ENCODE measurements at regions of chr6 and their contacts with region 1.

Region 1: DNA sequence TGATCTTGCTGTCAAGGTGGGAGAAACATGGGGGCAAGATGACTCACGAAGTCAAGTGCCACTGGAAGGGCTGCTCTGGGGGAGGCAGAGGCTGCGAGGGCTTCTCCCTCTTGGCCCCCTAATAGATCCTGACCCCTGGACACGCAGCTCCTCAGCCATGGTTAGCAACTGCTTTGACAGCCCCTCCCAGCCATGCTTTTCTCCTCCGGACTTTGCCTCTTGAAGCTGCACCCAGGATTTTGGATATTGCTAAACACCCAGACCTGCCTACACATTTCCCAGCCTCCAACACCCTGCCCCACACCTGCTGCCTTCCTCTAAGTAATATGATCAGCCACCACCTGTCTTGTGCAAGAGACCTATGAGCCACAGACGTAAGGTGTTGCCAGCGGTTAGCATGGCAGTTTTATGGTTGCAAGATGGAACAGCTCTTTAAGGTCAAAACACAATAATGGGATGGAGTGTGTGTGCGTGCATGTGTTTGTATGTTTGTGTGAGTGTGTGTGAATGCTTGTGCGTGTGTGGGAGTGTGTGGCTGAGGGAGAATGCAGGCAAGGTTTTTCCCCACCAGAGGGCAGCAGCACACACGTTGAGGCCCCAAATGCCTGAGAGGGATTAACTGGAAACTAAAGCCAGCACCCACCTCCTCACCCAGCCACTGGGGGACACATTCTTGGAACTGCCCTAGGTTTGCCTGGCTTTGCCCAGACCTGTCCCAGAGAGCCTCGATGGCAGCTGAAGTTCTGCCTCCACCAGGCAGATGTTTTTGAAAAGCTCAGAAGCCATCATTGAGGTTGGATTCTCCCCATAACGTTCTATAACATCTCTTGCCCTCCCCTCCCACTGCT is 2.5 kb downstream of the IP6K3 start:
- DNase-seq: peak; percentile 90
- H3K4me3 ChIP-seq: no peak overlapping the region; a peak in 1 of 4 replicates
- H3K27ac ChIP-seq: no peak overlapping the region
- H3K4me1 ChIP-seq: peaks cover 15 to 37% of the 10 kb centered on the region in 2 experiments; a peak in 3 of 4 replicates
- H3K27me3 ChIP-seq: no peaks in the 10 kb centered on the region
- CTCF ChIP-seq: peak; percentile 93
- EP300 ChIP-seq: no peak
- RAD21 ChIP-seq: peak; percentile 83

Region 2: DNA sequence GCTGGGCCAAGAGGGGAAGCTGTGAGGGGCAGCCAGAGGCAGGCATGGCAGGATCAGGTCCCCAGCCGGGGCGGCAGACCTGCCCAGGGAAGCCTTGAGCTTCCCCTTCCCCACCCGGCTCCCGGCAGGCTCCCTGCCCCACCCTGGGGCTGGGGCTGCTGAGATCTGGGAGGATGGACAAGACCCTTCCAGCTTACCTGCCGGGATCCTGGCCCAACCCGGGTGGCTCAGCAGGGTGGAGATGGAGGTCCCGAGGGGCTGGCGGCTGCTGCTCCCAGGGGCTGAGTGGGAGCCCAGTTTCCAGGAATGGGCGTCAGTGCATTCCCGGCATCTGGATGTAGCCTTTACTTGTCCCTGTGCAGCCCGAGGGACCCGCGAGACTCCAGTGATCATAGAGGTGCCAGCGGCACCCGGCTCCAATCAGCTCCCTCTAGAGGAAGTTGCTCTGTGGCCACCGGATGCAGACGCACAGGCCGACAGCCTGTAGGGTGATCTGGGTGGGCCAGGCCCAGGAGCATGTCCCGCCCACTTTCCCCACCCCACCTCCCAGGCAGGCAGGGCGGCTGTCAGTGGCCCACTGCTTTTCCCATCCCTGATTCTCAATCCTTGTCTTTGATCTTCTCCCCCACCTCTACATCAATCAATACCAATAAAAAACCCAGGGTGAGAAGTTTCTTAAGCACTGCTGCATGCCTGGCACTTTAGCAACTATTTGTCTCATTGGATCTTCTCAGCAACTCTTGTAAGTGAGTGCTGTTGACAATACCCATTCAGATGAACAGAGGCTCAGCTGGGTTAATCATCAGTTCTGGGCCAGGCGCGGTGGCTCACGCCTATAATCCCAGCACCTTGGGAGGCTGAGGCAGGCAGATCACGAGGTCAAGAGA is 164.2 kb before region 1 on chr6 and contains the start of gene BAK1:
- CTCF ChIA-PET with region 1: interaction called, 11 read pairs
- POLR2A ChIA-PET with region 1: no interaction called
- DNase-seq: peak; percentile 97
- H3K4me3 ChIP-seq: peak within 1 kb of the TSS; percentile 81 to 93
- H3K27ac ChIP-seq: peak within 1 kb of the TSS; percentile 56 to 64; a peak in 3 of 4 replicates
- H3K4me1 ChIP-seq: peaks cover 0 to 11% of the 10 kb centered on the region in 2 experiments; a peak in 1 of 4 replicates
- H3K27me3 ChIP-seq: no peaks in the 10 kb centered on the region
- CTCF ChIP-seq: peak; percentile 52
- EP300 ChIP-seq: no peak
- RAD21 ChIP-seq: peak; percentile 36; the same call in 1 of the 2 replicates
- polyA plus RNA-seq, gene BAK1: 15.4 and 21.2 TPM in 2 replicates

Region 3: GRCh38 chr6:33719326-33719987 is 24.8 kb before region 1 on chr6:
- CTCF ChIA-PET with region 1: interaction called, 21 read pairs
- POLR2A ChIA-PET with region 1: no interaction called
- DNase-seq: no peak
- H3K4me3 ChIP-seq: no peak overlapping the region
- H3K27ac ChIP-seq: no peak overlapping the region
- H3K4me1 ChIP-seq: no peaks in the 10 kb centered on the region
- H3K27me3 ChIP-seq: peaks cover 44% of the 10 kb centered on the region
- CTCF ChIP-seq: no peak
- EP300 ChIP-seq: no peak
- RAD21 ChIP-seq: no peak

Region 4: DNA sequence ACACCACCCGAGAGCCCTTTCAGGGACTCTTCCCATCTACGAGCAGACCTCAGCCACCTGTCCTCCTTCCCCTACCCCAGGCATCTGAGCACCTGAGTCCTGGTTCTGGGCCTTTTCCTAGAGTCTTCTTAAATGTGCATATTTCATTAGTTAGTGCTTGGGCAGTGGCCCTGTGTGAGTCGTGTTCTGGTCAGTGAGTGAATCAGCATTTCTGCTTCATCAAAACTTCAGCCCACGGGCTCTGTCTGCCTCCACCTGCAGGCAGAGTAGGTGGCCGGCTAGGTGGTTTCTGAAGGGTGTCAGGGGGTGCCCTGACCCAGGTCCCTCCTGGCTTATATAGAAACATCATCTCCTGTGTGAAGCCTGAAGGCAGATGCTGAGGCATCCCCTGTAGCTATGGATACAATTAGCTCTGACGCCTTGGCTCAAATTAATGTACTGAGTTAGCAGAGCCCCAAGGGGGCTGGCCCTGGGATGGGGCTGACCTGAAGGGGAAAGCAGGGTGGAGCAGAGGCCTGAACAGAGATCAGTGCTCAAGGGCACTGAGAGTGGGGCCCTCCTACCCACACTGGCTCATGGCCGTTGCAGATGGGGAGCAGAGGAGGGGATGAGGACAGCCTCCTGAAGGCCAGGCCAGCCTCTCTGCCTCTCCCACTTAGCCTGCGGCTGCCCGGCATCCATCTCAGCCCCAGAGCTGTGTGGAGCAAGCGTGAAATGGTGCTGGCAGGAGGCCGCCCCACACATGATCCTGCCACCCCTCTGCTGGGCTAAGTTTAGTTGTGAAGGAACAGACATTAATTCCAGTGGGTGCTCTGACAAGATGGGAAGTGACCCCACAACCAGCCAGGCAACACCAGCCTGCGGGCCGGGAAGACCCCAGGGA is 11.2 kb before region 1 on chr6:
- CTCF ChIA-PET with region 1: interaction called, 59 read pairs
- POLR2A ChIA-PET with region 1: interaction called, 3 read pairs
- DNase-seq: no peak
- H3K4me3 ChIP-seq: no peak overlapping the region
- H3K27ac ChIP-seq: no peak overlapping the region
- H3K4me1 ChIP-seq: peaks cover 0 to 13% of the 10 kb centered on the region in 2 experiments; a peak in 1 of 4 replicates
- H3K27me3 ChIP-seq: 0 out of 2 replicates have a peak, but pooled peaks cover 6% of the 10 kb centered on the region
- CTCF ChIP-seq: no peak
- EP300 ChIP-seq: no peak
- RAD21 ChIP-seq: no peak

Region 5: GRCh38 chr6:33761922-33762629 is 17.9 kb after region 1 on chr6:
- CTCF ChIA-PET with region 1: interaction called, 116 read pairs
- POLR2A ChIA-PET with region 1: no interaction called
- DNase-seq: peak; percentile 71
- H3K4me3 ChIP-seq: no peak overlapping the region
- H3K27ac ChIP-seq: peak overlapping the region in 1 of 2 experiments; percentile 56; a peak in 2 of 4 replicates
- H3K4me1 ChIP-seq: peaks cover 0 to 19% of the 10 kb centered on the region in 2 experiments; a peak in 1 of 4 replicates
- H3K27me3 ChIP-seq: no peaks in the 10 kb centered on the region
- CTCF ChIP-seq: peak; percentile 59
- EP300 ChIP-seq: no peak
- RAD21 ChIP-seq: peak; percentile 72

Region 6: DNA sequence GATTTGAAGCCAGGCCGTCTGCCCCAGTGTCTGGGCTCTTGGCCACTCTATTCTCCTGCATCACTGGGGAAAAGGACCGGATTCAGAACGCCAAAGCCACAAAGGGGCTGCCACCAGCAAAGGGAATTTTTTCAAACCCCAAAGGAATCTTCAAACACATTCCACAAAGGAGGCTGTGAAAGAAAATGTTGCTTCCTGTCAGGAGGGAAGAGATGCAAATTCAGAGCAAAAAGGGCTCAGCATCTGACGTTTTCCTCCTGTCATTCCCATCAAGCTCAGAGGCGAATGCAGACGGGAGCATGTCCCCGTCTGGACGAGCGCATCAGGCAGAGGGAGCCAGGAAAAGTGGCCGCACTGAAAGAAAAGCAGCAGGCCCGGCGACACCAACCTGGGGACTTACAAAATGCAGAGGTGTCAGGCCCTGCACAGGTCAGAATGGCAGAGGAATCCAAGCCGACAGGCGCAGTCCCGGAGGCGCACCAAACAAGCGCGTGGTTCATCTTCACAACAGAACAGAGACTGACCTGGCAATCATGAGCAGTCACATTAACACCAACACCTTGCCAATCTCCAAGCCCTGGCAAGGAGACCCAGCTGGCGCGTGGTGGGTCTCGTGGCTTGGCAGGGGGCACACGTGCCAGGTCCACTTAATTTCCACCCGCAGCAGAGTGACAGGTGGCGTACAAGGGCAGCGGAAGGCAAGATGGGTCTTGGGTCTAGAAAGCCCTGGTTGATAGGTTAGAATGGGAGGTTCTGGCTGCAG is 338.8 kb after region 1 on chr6:
- CTCF ChIA-PET with region 1: no interaction called
- POLR2A ChIA-PET with region 1: no interaction called
- DNase-seq: no peak
- H3K4me3 ChIP-seq: no peak overlapping the region
- H3K27ac ChIP-seq: no peak overlapping the region
- H3K4me1 ChIP-seq: no peaks in the 10 kb centered on the region
- H3K27me3 ChIP-seq: no peaks in the 10 kb centered on the region; the same call in 1 of the 2 replicates
- CTCF ChIP-seq: no peak
- EP300 ChIP-seq: no peak
- RAD21 ChIP-seq: no peak

Region 7: DNA sequence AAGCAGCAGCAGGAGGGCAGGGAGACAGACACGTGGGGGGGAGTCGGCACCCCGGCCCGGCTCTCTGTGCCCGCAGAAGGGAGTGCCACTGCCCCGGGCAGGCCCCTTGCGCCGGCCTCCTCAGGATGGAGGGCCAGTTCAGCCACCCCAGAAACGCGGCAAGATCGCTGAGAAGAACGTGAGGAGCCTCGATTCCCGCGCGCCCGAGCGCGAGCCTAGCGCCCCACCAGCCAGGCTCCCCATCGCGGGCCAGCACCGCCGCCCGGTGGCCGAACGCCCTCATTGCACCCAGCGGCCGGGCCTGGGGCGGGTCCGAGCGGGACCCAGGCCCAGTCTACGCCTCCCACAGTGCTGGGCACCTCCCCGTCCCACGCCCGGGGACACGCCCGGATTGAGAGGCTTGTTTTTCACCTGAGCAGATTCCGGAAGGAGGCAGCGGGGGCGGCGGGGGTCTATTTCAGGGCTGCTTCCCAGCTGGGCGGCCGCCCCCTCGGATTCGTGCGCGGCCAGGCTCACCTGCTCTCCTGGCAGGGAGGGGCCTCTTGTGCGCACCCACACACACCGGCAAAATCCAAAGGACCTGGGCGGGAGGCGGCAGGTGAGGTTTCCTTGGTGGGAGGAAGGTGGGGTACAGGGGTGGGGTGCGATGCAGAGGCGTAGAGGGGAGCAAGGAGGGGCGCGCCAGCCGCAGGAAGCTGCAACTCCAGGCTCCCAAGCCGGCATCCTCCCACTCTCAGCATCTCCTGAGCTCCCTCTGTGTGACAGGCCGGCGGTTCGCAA is 410.6 kb after region 1 on chr6:
- CTCF ChIA-PET with region 1: interaction called, 51 read pairs
- POLR2A ChIA-PET with region 1: no interaction called
- DNase-seq: peak; percentile 98
- H3K4me3 ChIP-seq: peak overlapping the region; percentile 17 to 59; a peak in 2 of 4 replicates
- H3K27ac ChIP-seq: no peak overlapping the region
- H3K4me1 ChIP-seq: peaks cover 0 to 2% of the 10 kb centered on the region in 2 experiments; a peak in 1 of 4 replicates
- H3K27me3 ChIP-seq: peaks cover 25% of the 10 kb centered on the region
- CTCF ChIP-seq: peak; percentile 89
- EP300 ChIP-seq: no peak
- RAD21 ChIP-seq: peak; percentile 95

Measured in SK-N-SH (cell line).